H1 (cell line): ENCODE measurements at regions of chr19 and their contacts with region 1.

Region 1: GRCh38 chr19:46919324-46919723 is 58.5 kb downstream of the ARHGAP35 start:
- DNase-seq: no peak
- H3K4me3 ChIP-seq: no peak overlapping the region
- H3K27ac ChIP-seq: no peak overlapping the region
- H3K4me1 ChIP-seq: peaks cover 0 to 3% (median 0%) of the 10 kb centered on the region in 4 experiments; a peak in 2 of 7 replicates
- H3K27me3 ChIP-seq: no peaks in the 10 kb centered on the region; a peak in 1 of 7 replicates
- CTCF ChIP-seq: no peak
- EP300 ChIP-seq: no peak
- POLR2A ChIP-seq: no peak
- RAD21 ChIP-seq: no peak

Region 2: GRCh38 chr19:46872967-46873366 is 46.4 kb before region 1 on chr19:
- CTCF ChIA-PET with region 1: no interaction called
- POLR2A ChIA-PET with region 1: no interaction called
- DNase-seq: no peak
- H3K4me3 ChIP-seq: no peak overlapping the region
- H3K27ac ChIP-seq: no peak overlapping the region
- H3K4me1 ChIP-seq: peaks cover 0 to 4% (median 1%) of the 10 kb centered on the region in 4 experiments; a peak in 2 of 7 replicates
- H3K27me3 ChIP-seq: no peaks in the 10 kb centered on the region
- CTCF ChIP-seq: no peak
- EP300 ChIP-seq: no peak
- POLR2A ChIP-seq: no peak
- RAD21 ChIP-seq: no peak

Region 3: GRCh38 chr19:46890423-46891170 is 28.7 kb before region 1 on chr19:
- CTCF ChIA-PET with region 1: no interaction called
- POLR2A ChIA-PET with region 1: no interaction called
- DNase-seq: no peak
- H3K4me3 ChIP-seq: no peak overlapping the region
- H3K27ac ChIP-seq: no peak overlapping the region
- H3K4me1 ChIP-seq: peaks cover 0 to 6% (median 1%) of the 10 kb centered on the region in 4 experiments; a peak in 2 of 7 replicates
- H3K27me3 ChIP-seq: no peaks in the 10 kb centered on the region
- CTCF ChIP-seq: no peak
- EP300 ChIP-seq: no peak
- POLR2A ChIP-seq: no peak
- RAD21 ChIP-seq: no peak

Region 4: GRCh38 chr19:46907880-46908279 is 11.4 kb before region 1 on chr19:
- CTCF ChIA-PET with region 1: interaction called, 22 read pairs
- POLR2A ChIA-PET with region 1: interaction called, 6 read pairs
- DNase-seq: no peak
- H3K4me3 ChIP-seq: no peak overlapping the region
- H3K27ac ChIP-seq: no peak overlapping the region
- H3K4me1 ChIP-seq: peaks cover 0 to 10% (median 3%) of the 10 kb centered on the region in 4 experiments; a peak in 2 of 7 replicates
- H3K27me3 ChIP-seq: no peaks in the 10 kb centered on the region
- CTCF ChIP-seq: no peak
- EP300 ChIP-seq: no peak
- POLR2A ChIP-seq: no peak
- RAD21 ChIP-seq: no peak